ENCODE measurements at regions of chr16 and their contacts with region 1.

Region 1: DNA sequence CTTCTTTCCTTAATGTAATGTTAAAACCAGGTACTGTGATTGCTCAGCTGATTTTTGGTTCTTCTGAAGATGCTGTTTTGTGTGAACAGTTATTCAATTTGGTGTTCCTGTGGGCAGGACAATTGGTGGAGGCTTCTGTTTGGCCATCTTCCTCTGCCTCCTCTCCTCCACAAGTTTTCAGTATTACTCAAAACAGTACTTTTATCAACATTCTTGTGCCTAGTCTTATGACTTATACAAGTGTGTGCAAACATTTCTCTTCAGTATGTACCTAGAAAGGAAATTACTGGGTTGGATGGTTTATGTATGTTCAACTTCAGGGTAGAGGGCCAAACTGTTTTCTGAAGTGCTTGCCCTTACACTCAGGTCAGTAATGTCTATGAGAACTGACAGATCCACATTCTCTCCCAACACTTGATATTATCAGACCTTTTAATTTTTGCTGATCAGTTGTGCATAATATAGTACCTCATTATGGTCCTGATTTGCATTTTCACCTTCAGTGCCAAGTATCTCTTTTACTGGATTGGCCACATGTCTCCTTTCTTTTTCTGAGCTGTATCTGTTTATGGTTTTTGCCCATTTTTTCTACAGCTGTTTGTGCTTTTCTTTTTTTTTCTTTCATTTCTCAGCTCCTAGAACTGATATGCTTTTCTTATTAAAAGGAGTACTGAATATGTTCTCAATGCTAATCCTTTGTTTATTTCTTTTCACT is 50.9 kb downstream of the ERCC4 start:
- DNase-seq: no peak
- ATAC-seq: no peak
- H3K4me3 ChIP-seq: no peak overlapping the region
- H3K27ac ChIP-seq: no peak overlapping the region
- H3K4me1 ChIP-seq: no peaks in the 10 kb centered on the region
- H3K27me3 ChIP-seq: peaks cover 4 to 21% of the 10 kb centered on the region in 2 experiments; a peak in 3 of 5 replicates
- CTCF ChIP-seq: no peak
- EP300 ChIP-seq: no peak
- POLR2A ChIP-seq: no peak
- RAD21 ChIP-seq: no peak

Region 2: DNA sequence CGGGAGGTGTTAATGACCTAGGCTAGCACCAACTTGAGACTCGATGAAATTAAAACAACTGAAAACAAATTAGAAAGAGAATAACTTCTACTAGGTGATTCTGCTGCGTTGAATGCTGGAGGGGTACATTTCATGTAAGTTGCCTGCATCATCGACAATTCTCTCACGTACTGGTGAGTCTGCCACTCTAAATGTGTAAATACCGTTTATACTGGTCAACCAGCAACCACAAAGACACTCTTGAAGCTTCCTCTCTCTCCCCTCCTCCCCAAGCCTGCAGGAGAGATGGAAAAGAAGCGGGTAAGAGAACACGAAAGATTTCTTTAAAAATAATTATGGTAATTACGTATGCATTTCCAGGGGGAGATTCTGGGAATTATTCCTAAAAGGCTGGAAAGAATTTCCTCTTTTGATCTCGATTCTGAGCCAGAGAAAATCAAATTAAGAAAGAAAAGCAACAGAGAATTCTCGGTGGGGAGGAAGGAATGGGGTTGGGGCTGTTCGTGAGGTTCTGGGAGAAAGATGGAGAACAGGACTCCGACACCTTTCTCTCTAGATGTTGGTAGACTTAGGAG is 31.6 kb after region 1 on chr16:
- CTCF ChIA-PET with region 1: no interaction called
- POLR2A ChIA-PET with region 1: no interaction called
- in situ Hi-C with region 1: no loop called
- intact Hi-C with region 1: no loop called
- DNase-seq: no peak
- ATAC-seq: no peak
- H3K4me3 ChIP-seq: no peak overlapping the region
- H3K27ac ChIP-seq: no peak overlapping the region
- H3K4me1 ChIP-seq: peaks cover 9 to 22% of the 10 kb centered on the region in 2 experiments; a peak in 4 of 5 replicates
- H3K27me3 ChIP-seq: peaks cover 17 to 37% of the 10 kb centered on the region in 2 experiments
- CTCF ChIP-seq: no peak
- EP300 ChIP-seq: no peak
- POLR2A ChIP-seq: no peak
- RAD21 ChIP-seq: no peak

Region 3: DNA sequence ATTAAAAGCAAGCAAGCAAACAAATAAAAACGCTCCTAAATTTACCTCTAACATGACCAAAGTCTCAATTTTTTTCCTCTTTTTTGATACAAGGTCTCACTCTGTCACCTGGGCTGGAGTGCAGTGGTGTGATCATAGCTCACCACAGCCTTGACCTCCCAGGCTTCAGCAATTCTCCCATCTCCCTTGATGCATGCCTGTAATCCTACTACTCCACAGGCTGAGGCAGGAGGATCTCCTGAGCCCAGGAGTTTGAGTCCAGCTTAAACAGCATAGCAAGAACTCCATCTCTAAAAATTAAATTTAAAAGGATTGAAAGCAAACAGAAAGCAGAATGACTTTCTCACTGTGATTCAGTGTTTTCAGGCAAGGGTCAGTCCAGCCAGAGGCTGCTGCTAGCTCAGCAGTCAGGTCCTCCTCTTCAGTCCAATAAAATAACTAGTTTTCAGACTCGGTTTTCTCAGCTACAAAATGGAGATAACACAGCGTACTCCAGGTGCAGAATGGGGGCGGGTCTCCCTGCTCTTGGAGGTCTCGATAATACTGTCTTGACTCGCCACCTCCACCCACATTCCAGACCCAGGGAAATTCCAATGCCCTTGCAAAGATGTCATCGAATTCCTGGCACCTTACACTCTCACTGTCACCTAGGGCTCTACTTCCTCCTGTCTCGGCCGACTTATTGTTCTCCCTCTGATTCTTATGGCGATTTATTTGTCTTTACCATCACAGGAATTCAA is 79.6 kb after region 1 on chr16:
- CTCF ChIA-PET with region 1: no interaction called
- POLR2A ChIA-PET with region 1: no interaction called
- in situ Hi-C with region 1: no loop called
- intact Hi-C with region 1: loop called (anchors 10 kb)
- DNase-seq: no peak
- ATAC-seq: no peak
- H3K4me3 ChIP-seq: no peak overlapping the region
- H3K27ac ChIP-seq: no peak overlapping the region
- H3K4me1 ChIP-seq: no peaks in the 10 kb centered on the region; a peak in 1 of 5 replicates
- H3K27me3 ChIP-seq: peaks cover 11 to 29% of the 10 kb centered on the region in 2 experiments; a peak in 3 of 5 replicates
- CTCF ChIP-seq: no peak
- EP300 ChIP-seq: no peak
- POLR2A ChIP-seq: no peak
- RAD21 ChIP-seq: no peak